ENCODE measurements at regions of chr4 and their contacts with region 1.

Region 1: DNA sequence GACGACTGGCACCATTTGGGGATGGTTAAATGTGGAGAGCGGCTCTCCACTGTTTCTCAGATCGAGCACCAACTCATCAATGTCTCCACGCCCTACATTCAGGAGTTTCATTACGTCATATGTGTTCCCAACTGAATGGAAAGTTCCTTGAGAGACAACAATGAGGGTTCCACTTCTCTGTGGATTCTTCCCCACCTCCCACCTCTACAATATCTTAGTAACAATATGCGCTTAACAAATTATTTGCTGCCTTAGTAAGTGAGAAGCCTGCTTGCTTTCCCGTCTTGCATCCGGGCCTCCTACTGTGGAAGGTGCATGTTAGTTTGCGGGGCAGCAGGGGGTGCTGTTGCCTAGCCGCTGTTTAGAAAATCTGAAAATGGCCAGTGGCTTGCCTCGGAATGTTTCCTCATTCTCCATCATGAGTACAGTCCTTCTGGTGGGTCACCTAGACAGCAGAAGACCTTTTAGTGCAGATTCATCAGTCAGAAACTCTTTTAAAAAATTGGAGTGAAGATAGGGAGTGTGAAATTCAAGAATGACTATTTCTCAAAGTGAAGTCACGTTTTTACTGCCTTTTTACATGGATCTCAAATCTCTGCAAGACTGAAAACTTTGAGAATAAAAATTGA is 55.7 kb downstream of the PHOX2B start:
- DNase-seq: peak; percentile 76
- H3K4me3 ChIP-seq: peak overlapping the region; percentile 2
- H3K27ac ChIP-seq: no peak overlapping the region
- H3K4me1 ChIP-seq: no peaks in the 10 kb centered on the region
- H3K27me3 ChIP-seq: peaks cover 26% of the 10 kb centered on the region
- CTCF ChIP-seq: peak; percentile 92

Region 2: GRCh38 chr4:40897557-40898203 is 795.2 kb before region 1 on chr4:
- CTCF ChIA-PET with region 1: no interaction called
- POLR2A ChIA-PET with region 1: no interaction called
- intact Hi-C with region 1: no loop called
- DNase-seq: peak; percentile 89
- H3K4me3 ChIP-seq: peak overlapping the region; percentile 34
- H3K27ac ChIP-seq: no peak overlapping the region
- H3K4me1 ChIP-seq: no peaks in the 10 kb centered on the region
- H3K27me3 ChIP-seq: no peaks in the 10 kb centered on the region
- CTCF ChIP-seq: peak; percentile 87

Region 3: DNA sequence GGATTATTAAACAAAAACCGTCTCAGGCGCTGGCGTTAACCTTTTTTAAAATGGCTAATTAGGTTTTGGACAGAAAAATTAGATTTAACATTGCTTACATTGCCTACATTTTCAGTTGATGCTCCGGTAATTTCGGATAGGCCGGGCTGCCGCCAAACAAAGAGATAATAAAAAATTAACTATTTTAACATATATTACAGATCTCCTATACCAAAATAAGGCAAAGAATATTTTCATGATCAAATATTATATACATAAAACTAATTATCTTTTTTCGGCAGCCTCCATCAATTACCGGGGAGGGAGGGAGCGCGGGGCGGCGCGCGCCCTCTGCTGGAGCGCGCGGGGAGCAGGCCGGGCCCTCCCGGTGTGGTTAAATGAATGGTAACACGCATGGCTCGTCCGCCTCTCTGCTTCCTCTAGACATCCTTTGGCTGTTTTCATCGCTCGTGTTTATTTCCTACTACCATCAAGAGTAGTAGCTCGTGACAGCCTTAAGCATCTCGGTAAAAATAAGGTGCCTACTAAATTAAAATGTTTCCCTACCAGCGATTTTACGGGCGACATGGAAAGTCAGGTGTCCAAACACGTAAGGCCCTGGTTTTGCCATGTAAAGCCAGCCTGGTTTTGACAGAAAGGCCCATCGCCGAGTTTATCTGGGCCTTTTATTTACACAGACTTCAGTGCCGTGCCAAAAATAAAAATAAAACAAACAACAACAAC is 190.0 kb after region 1 on chr4:
- CTCF ChIA-PET with region 1: no interaction called
- POLR2A ChIA-PET with region 1: no interaction called
- intact Hi-C with region 1: loop called (anchors 1 kb)
- DNase-seq: peak; percentile 47
- H3K4me3 ChIP-seq: peak overlapping the region; percentile 40
- H3K27ac ChIP-seq: no peak overlapping the region
- H3K4me1 ChIP-seq: peaks cover 10% of the 10 kb centered on the region
- H3K27me3 ChIP-seq: peaks cover 50% of the 10 kb centered on the region
- CTCF ChIP-seq: peak; percentile 93

Region 4: GRCh38 chr4:41887821-41888686 is 195.2 kb after region 1 on chr4:
- CTCF ChIA-PET with region 1: no interaction called
- POLR2A ChIA-PET with region 1: no interaction called
- intact Hi-C with region 1: loop called (anchors 1 kb)
- DNase-seq: peak; percentile 58
- H3K4me3 ChIP-seq: no peak overlapping the region
- H3K27ac ChIP-seq: no peak overlapping the region
- H3K4me1 ChIP-seq: no peaks in the 10 kb centered on the region
- H3K27me3 ChIP-seq: peaks cover 21% of the 10 kb centered on the region
- CTCF ChIP-seq: peak; percentile 90

Region 5: GRCh38 chr4:41963105-41963504 is 270.3 kb after region 1 on chr4:
- CTCF ChIA-PET with region 1: no interaction called
- POLR2A ChIA-PET with region 1: no interaction called
- intact Hi-C with region 1: loop called (anchors 5 kb)
- DNase-seq: peak; percentile 41
- H3K4me3 ChIP-seq: no peak overlapping the region
- H3K27ac ChIP-seq: no peak overlapping the region
- H3K4me1 ChIP-seq: no peaks in the 10 kb centered on the region
- H3K27me3 ChIP-seq: no peaks in the 10 kb centered on the region
- CTCF ChIP-seq: peak; percentile 59; the same call in 1 of the 2 replicates

Region 6: GRCh38 chr4:42282081-42282901 is 589.5 kb after region 1 on chr4:
- CTCF ChIA-PET with region 1: no interaction called
- POLR2A ChIA-PET with region 1: no interaction called
- intact Hi-C with region 1: loop called (anchors 2 kb)
- DNase-seq: peak; percentile 85
- H3K4me3 ChIP-seq: no peak overlapping the region
- H3K27ac ChIP-seq: no peak overlapping the region
- H3K4me1 ChIP-seq: no peaks in the 10 kb centered on the region
- H3K27me3 ChIP-seq: no peaks in the 10 kb centered on the region
- CTCF ChIP-seq: peak; percentile 80